OCI-LY7 (cell line): ENCODE measurements at regions of chr2 and their contacts with region 1.

Region 1: DNA sequence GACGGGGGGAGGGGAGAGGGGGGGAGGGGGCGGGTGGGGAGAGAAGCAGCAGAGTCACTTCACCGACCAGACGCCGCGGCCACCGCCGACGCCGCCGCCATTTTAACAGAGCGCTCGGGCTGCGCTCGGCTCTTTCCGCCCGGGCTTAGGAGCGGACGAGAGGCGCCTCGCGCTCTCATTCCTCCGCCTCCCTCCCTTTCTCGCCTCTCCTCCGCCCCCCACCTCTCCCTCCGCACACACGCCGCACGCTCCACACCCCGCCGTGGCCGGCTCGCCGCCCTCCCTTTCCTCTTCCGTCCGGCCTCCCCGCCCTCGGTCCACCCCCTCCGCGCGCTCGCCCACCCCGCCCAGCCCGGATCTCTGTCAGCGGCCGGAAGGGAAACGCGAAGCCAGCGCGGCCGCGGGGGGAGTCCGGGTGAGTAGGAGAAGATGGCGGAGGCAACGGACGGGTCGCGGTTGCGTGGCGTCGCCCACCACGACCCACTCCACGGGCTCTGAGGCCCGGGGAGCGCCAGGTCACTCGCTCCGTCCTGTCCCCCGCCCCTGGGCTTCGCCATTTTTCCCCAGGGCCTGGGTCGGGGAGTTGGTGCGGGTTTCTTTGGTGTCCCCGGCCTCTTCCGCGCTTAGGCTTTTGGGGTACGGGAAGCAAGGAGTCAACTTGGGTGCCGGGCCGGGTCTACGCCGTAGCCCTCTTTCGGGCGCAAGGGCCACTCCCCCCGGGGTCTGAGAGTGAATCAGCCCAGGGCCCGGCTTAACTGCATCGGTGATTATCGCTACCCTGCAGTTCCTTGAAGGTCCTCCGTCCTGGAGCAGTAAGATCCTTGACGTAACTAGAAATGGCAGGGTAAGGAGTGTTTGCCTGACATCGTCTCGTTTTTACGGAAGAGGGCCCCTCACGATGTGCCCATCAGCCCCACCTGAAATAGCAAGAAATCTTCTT is at the start of gene USP34:
- DNase-seq: peak; percentile 92
- H3K4me3 ChIP-seq: peak within 1 kb of the TSS; percentile 91
- H3K27ac ChIP-seq: peak within 1 kb of the TSS; percentile 90
- H3K4me1 ChIP-seq: peaks cover 32% of the 10 kb centered on the region
- CTCF ChIP-seq: no peak
- total RNA-seq, gene USP34: 147 and 192 TPM in 2 replicates

Region 2: DNA sequence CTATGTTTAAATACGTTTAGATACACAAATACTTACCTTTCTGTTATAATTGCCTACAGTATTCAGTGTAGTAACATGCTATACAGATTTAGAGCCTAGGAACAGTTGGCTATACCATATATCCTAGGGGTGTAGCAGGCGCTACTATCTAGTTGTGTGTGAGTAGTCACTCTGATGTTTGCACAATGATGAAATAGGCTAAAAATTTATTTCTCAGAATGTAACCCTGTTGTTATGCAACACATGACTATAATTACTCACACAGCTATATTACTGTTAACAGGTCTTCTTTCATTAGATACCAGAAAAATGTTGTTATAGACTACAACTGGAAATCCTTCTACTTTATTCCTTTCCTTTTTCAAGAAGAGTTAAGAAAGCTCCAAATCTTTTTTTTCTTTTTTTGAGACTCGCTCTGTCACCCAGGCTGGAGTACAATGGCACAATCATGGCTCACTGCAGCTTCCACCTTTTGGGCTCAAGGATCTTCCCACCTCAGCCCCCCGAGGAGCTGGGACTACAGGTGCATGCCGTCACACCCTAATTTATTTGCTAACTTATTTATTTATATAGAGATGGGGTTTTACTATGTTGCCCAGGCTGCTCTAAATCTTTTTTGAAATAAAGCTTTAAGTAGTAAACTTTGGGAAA is 260.8 kb before region 1 on chr2:
- CTCF ChIA-PET with region 1: no interaction called
- POLR2A ChIA-PET with region 1: no interaction called
- intact Hi-C with region 1: no loop called
- DNase-seq: no peak
- H3K4me3 ChIP-seq: no peak overlapping the region
- H3K27ac ChIP-seq: no peak overlapping the region
- H3K4me1 ChIP-seq: no peaks in the 10 kb centered on the region
- CTCF ChIP-seq: no peak

Region 3: GRCh38 chr2:61420991-61421544 is 50.2 kb before region 1 on chr2:
- CTCF ChIA-PET with region 1: no interaction called
- POLR2A ChIA-PET with region 1: interaction called, 14 read pairs
- intact Hi-C with region 1: loop called (anchors 1 kb)
- DNase-seq: peak; percentile 44
- H3K4me3 ChIP-seq: peak overlapping the region; percentile 57
- H3K27ac ChIP-seq: peak overlapping the region; percentile 98
- H3K4me1 ChIP-seq: peaks cover 83% of the 10 kb centered on the region
- CTCF ChIP-seq: no peak

Region 4: DNA sequence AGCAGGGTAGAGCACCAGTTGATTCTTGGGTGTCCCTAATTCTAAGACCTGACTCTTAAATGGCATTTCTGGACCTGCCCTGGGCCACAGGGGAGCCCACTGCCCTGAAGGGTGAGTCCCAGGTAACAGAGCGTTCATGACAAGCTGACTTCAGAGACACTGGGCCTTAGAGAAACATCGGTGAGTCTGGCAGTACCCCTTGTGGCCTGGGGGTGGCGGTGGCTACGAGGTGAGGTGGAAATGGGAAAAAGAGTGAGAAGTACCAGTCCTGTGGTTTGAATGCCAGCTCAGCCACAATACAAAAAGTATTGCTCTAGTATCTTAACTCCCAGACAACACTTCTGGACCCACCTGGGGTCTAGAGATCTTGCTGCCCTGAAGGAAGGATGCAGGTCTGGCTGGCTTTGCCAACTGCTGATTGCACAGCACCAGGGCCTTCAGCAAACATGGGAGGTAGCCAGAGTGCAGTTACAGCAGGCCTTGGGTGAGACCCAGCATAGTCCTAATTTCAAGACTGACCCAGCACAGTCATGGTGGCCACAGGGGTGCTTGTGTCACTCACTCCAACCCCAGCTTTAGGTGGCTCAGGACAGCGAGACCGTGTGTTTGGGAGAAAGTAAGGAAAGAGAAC is 44.9 kb before region 1 on chr2:
- CTCF ChIA-PET with region 1: interaction called, 3 read pairs
- POLR2A ChIA-PET with region 1: interaction called, 14 read pairs
- intact Hi-C with region 1: loop called (anchors 1 kb)
- DNase-seq: peak; percentile 89
- H3K4me3 ChIP-seq: peak overlapping the region; percentile 57
- H3K27ac ChIP-seq: peak overlapping the region; percentile 98
- H3K4me1 ChIP-seq: peaks cover 85% of the 10 kb centered on the region
- CTCF ChIP-seq: peak; percentile 90

Region 5: GRCh38 chr2:61443342-61444041 is 27.7 kb before region 1 on chr2:
- CTCF ChIA-PET with region 1: no interaction called
- POLR2A ChIA-PET with region 1: interaction called, 14 read pairs
- intact Hi-C with region 1: loop called (anchors 2 kb)
- DNase-seq: peak; percentile 79
- H3K4me3 ChIP-seq: peak overlapping the region; percentile 63
- H3K27ac ChIP-seq: peak overlapping the region; percentile 94
- H3K4me1 ChIP-seq: peaks cover 99% of the 10 kb centered on the region
- CTCF ChIP-seq: no peak